CD4-positive, alpha-beta T cell (primary cell): ENCODE measurements at regions of chr3 and their contacts with region 1.

Region 1: DNA sequence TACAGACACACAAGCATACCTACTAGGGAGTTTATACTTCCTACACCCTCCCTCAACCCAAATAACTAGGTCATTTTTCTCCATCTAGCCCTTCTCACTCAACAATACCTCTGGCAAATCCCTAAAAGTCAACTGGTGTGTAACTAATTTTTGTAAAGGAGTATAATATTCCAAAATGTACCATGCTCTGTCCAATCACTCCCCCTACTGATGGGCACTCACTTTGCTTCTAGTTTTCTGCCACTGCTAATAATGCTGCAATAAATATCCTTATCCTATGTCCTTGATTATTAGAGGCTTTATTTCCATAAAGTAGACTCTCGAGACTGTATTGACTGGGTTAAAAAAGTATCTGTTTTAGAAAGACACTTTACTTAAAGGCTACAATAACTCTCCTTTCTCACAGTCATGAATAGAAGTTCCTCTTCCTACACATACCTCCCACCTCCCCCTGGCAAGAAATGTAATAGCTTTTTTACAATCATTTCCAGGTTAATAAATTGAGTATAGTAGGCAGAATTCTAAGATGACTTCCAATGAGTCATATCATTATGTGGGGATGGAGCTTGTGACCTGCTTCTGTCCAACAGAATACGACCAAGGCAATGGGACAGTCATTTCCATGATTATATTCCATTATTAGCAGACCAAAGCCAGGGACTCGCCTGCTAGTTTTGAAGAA is 30.0 kb downstream of the SHQ1 start:
- DNase-seq: peak in 4 of 14 experiments; percentile 10 to 30 (median 14)
- ATAC-seq: no peak
- H3K4me3 ChIP-seq: no peak overlapping the region
- H3K4me3 Mint-ChIP-seq: no peak overlapping the region
- H3K27ac ChIP-seq: no peak overlapping the region
- H3K27ac Mint-ChIP-seq: no peak overlapping the region
- H3K4me1 ChIP-seq: peaks cover 7% of the 10 kb centered on the region
- H3K4me1 Mint-ChIP-seq: peaks cover 13% of the 10 kb centered on the region
- H3K27me3 ChIP-seq: no peaks in the 10 kb centered on the region
- H3K27me3 Mint-ChIP-seq: no peaks in the 10 kb centered on the region
- CTCF ChIP-seq: peak; percentile 56

Region 2: GRCh38 chr3:71710906-71711494 is 1107.2 kb before region 1 on chr3:
- CTCF ChIA-PET with region 1: interaction called, 3 read pairs
- POLR2A ChIA-PET with region 1: no interaction called
- intact Hi-C with region 1: loop called (anchors 1 to 5 kb)
- DNase-seq: peak in 3 of 14 experiments; percentile 68 to 72 (median 71)
- ATAC-seq: peak; percentile 58
- H3K4me3 ChIP-seq: no peak overlapping the region
- H3K4me3 Mint-ChIP-seq: peak overlapping the region; percentile 26
- H3K27ac ChIP-seq: no peak overlapping the region
- H3K27ac Mint-ChIP-seq: peak overlapping the region; percentile 80
- H3K4me1 ChIP-seq: peaks cover 50% of the 10 kb centered on the region
- H3K4me1 Mint-ChIP-seq: peaks cover 92% of the 10 kb centered on the region
- H3K27me3 ChIP-seq: no peaks in the 10 kb centered on the region
- H3K27me3 Mint-ChIP-seq: no peaks in the 10 kb centered on the region
- CTCF ChIP-seq: peak; percentile 86

Region 3: DNA sequence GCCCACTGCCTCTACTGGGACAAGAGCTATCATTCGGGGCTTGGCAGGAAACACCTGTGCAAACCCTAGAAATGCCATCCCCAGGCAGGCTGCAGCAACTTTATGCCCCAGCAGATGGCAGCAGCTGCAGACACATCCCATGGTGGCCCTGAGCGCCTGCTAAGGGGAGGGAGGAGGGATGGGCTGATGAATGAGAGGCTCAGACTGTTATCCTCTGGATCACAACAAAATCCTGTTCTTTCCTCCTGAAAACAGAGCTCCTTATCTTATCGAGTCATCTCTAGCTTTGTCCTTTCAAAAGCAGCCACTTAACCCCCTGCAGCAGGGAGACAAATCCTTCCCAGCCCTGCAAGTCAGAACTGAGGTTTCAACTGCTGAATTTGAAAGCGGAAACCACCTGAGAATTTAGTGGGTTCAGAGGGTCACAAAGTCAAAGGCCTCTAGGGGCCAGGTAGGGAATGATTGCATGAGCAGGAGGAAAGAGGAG is 942.7 kb before region 1 on chr3:
- CTCF ChIA-PET with region 1: interaction called, 7 read pairs
- POLR2A ChIA-PET with region 1: interaction called, 5 read pairs
- intact Hi-C with region 1: loop called (anchors 1 kb)
- DNase-seq: peak; percentile 63 to 84 (median 74)
- ATAC-seq: peak; percentile 99
- H3K4me3 ChIP-seq: no peak overlapping the region
- H3K4me3 Mint-ChIP-seq: no peak overlapping the region
- H3K27ac ChIP-seq: no peak overlapping the region
- H3K27ac Mint-ChIP-seq: no peak overlapping the region
- H3K4me1 ChIP-seq: peaks cover 12% of the 10 kb centered on the region
- H3K4me1 Mint-ChIP-seq: peaks cover 21% of the 10 kb centered on the region
- H3K27me3 ChIP-seq: no peaks in the 10 kb centered on the region
- H3K27me3 Mint-ChIP-seq: no peaks in the 10 kb centered on the region
- CTCF ChIP-seq: peak; percentile 78

Region 4: DNA sequence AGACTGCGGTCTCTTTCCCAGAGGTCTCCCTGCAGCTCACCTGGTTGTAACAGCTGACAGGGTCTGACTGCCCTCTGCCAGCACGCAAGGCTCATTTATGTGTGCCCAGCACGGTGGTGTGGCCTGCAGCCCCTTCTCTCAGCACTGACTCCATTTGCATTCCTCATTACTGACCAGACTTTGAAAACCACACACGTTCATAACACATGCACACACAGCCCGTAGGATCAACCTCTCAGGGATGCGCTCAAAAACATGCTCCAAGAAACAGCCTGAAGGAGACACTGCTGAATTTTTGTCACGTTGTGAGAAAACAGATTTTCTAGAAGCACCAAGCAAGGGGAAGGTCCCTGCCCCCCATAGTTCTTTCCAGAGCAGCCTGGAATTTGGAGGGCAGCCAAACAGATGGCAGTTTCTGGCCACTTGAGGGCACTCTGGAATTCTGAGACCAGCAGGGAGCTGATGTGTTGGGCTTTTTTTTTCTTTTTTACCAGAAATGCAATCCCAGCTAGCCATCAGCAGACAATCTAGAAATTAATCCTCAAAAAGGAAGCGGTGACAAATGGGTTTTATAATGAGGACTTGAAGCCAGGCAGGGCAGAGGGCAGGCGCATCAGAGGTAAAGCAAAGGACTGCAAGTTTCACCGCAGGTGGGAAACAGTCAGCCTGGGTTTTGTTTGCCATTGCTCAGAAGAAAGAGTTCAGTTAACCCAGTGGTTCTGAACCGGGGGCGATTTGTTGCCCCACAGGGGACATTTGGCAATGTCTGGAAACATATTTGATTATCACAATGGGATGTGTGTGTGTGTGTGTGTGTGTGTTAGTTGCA is 862.8 kb before region 1 on chr3:
- CTCF ChIA-PET with region 1: no interaction called
- POLR2A ChIA-PET with region 1: no interaction called
- intact Hi-C with region 1: loop called in 1 of 2 experiments (anchors 10 kb)
- DNase-seq: peak in 4 of 14 experiments; percentile 6 to 42 (median 34)
- ATAC-seq: no peak
- H3K4me3 ChIP-seq: no peak overlapping the region
- H3K4me3 Mint-ChIP-seq: no peak overlapping the region
- H3K27ac ChIP-seq: no peak overlapping the region
- H3K27ac Mint-ChIP-seq: no peak overlapping the region
- H3K4me1 ChIP-seq: peaks cover 3% of the 10 kb centered on the region
- H3K4me1 Mint-ChIP-seq: peaks cover 4% of the 10 kb centered on the region
- H3K27me3 ChIP-seq: no peaks in the 10 kb centered on the region
- H3K27me3 Mint-ChIP-seq: no peaks in the 10 kb centered on the region
- CTCF ChIP-seq: peak; percentile 24

Region 5: DNA sequence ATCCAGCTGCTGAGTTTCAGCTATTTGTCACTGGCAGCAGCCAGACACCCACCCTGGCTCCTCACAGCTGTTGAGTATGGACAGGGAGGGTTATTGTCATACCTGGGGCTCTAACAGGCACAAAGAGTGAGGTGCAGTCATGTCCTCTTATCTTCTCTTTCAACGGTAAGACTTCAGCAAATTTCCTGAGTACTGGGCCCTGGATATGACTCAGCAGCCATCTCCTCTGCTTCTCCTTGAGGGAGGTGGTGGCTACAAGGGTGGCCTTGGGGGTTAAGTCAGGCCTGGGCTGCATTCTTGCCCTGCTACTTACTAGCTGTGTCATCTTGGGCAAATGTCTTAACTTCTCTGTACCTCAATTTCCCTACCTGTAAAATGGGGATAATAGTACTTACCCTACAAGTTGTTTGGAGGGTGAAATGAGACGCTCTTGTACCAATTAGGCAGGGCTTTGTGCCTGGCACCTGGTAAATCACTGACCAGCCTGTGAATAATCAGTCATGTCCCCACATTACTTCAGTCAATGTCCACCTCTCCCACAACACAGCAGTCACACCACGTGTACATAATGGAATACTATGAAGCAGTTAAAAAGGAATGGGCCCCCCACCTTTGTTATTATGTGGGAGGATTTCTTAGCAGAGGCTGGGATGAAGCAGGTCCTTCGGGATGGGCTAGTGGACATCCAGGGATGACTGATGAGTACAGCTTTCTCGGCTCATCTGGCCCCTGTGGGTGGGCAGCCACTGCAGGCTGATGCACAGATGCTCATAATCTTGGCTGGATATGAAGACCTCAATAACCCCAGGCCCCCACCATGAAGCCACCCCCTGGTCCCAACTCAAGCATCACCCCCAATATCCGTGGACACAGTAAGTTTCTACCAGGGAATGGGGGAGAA is 498.8 kb before region 1 on chr3:
- CTCF ChIA-PET with region 1: no interaction called
- POLR2A ChIA-PET with region 1: no interaction called
- intact Hi-C with region 1: no loop called
- DNase-seq: no peak
- ATAC-seq: no peak
- H3K4me3 ChIP-seq: no peak overlapping the region
- H3K4me3 Mint-ChIP-seq: no peak overlapping the region
- H3K27ac ChIP-seq: no peak overlapping the region
- H3K27ac Mint-ChIP-seq: no peak overlapping the region
- H3K4me1 ChIP-seq: no peaks in the 10 kb centered on the region
- H3K4me1 Mint-ChIP-seq: no peaks in the 10 kb centered on the region
- H3K27me3 ChIP-seq: no peaks in the 10 kb centered on the region
- H3K27me3 Mint-ChIP-seq: no peaks in the 10 kb centered on the region
- CTCF ChIP-seq: no peak

Region 6: GRCh38 chr3:72447059-72447946 is 370.9 kb before region 1 on chr3:
- CTCF ChIA-PET with region 1: no interaction called
- POLR2A ChIA-PET with region 1: no interaction called
- intact Hi-C with region 1: loop called in 1 of 2 experiments (anchors 10 kb)
- DNase-seq: peak; percentile 86 to 98 (median 93)
- ATAC-seq: peak; percentile 89
- H3K4me3 ChIP-seq: peak overlapping the region; percentile 69
- H3K4me3 Mint-ChIP-seq: peak overlapping the region; percentile 85
- H3K27ac ChIP-seq: peak overlapping the region in 1 of 2 donors; percentile 55
- H3K27ac Mint-ChIP-seq: peak overlapping the region; percentile 74
- H3K4me1 ChIP-seq: peaks cover 16% of the 10 kb centered on the region
- H3K4me1 Mint-ChIP-seq: peaks cover 43% of the 10 kb centered on the region
- H3K27me3 ChIP-seq: no peaks in the 10 kb centered on the region
- H3K27me3 Mint-ChIP-seq: no peaks in the 10 kb centered on the region
- CTCF ChIP-seq: peak; percentile 13

Region 7: DNA sequence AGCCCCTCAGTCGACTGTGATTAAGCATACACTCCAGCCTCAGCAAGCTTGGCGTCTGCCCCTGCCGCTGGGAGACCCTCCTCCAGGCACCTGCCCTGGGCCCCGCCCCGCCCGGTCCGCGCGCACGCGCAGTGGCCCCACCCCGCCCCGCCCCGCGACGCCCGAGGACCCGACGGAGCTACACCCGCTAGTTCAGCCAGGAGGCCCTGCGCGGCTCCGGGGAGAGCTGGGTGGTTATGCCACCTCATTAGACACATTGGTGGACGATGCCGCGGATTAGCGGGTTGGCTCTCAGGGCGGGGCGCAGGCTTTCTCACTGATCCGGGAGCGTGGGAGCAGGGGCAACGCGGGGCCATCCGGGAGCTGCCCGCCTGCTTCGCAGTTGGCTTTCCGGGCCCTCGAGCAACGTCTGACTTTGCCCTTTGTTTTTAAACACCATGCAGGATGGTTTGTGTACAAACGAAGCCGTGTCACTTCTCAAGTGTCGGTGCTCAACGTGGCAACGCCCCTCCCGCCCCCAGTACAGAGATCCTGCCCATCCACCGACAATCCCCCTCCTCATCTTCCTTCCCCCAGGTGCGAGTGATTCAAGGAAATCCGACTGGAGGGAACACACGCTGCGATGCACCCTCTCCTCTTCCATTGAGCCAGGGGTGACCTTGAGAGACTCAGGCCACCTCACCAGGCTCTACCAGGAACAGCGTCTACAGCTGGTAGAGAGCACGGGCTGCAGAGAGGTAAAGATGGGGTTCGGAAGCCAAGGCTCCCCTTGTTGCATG is 79.3 kb before region 1 on chr3:
- CTCF ChIA-PET with region 1: no interaction called
- POLR2A ChIA-PET with region 1: interaction called, 61 read pairs
- intact Hi-C with region 1: loop called (anchors 2 to 5 kb)
- DNase-seq: peak; percentile 63 to 87 (median 74)
- ATAC-seq: peak; percentile 89
- H3K4me3 ChIP-seq: peak overlapping the region; percentile 76
- H3K4me3 Mint-ChIP-seq: peak overlapping the region; percentile 95
- H3K27ac ChIP-seq: peak overlapping the region; percentile 54
- H3K27ac Mint-ChIP-seq: peak overlapping the region; percentile 99
- H3K4me1 ChIP-seq: peaks cover 25% of the 10 kb centered on the region
- H3K4me1 Mint-ChIP-seq: peaks cover 36% of the 10 kb centered on the region
- H3K27me3 ChIP-seq: no peaks in the 10 kb centered on the region
- H3K27me3 Mint-ChIP-seq: no peaks in the 10 kb centered on the region
- CTCF ChIP-seq: no peak